ENCODE measurements at regions of chr3 and their contacts with region 1.

Region 1: GRCh38 chr3:138829097-138829845 is 5.5 kb downstream of the PIK3CB start:
- DNase-seq: no peak
- ATAC-seq: no peak
- H3K4me3 ChIP-seq: no peak overlapping the region
- H3K4me3 Mint-ChIP-seq: no peak overlapping the region
- H3K27ac ChIP-seq: no peak overlapping the region
- H3K27ac Mint-ChIP-seq: no peak overlapping the region
- H3K4me1 ChIP-seq: peaks cover 3 to 17% of the 10 kb centered on the region in 2 experiments
- H3K4me1 Mint-ChIP-seq: peaks cover 41 to 47% (median 44%) of the 10 kb centered on the region in 3 donors
- H3K27me3 ChIP-seq: no peaks in the 10 kb centered on the region
- H3K27me3 Mint-ChIP-seq: no peaks in the 10 kb centered on the region

Region 2: GRCh38 chr3:138842483-138843188 is 13.4 kb after region 1 on chr3:
- CTCF ChIA-PET with region 1: interaction called in 1 of 2 experiments, 13 read pairs
- POLR2A ChIA-PET with region 1: no interaction called
- DNase-seq: no peak
- ATAC-seq: no peak
- H3K4me3 ChIP-seq: no peak overlapping the region
- H3K4me3 Mint-ChIP-seq: no peak overlapping the region
- H3K27ac ChIP-seq: no peak overlapping the region
- H3K27ac Mint-ChIP-seq: no peak overlapping the region
- H3K4me1 ChIP-seq: no peaks in the 10 kb centered on the region
- H3K4me1 Mint-ChIP-seq: no peaks in the 10 kb centered on the region
- H3K27me3 ChIP-seq: peaks cover 0 to 8% of the 10 kb centered on the region in 2 experiments
- H3K27me3 Mint-ChIP-seq: no peaks in the 10 kb centered on the region